Breast epithelium (tissue), 4 donors: ENCODE measurements at regions of chr1 and their contacts with region 1.

Region 1: GRCh38 chr1:44911026-44911425 is 68.0 kb upstream of the PTCH2 start:
- DNase-seq: no peak
- H3K4me3 ChIP-seq: no peak overlapping the region
- H3K27ac ChIP-seq: no peak overlapping the region
- H3K4me1 ChIP-seq: no peaks in the 10 kb centered on the region
- H3K27me3 ChIP-seq: no peaks in the 10 kb centered on the region
- CTCF ChIP-seq: no peak
- POLR2A ChIP-seq: no peak

Region 2: GRCh38 chr1:44924835-44925513 is 13.9 kb after region 1 on chr1:
- intact Hi-C with region 1: loop called (anchors 1 kb)
- DNase-seq: no peak
- H3K4me3 ChIP-seq: no peak overlapping the region
- H3K27ac ChIP-seq: no peak overlapping the region
- H3K4me1 ChIP-seq: no peaks in the 10 kb centered on the region
- H3K27me3 ChIP-seq: no peaks in the 10 kb centered on the region
- CTCF ChIP-seq: peak in 1 of 3 donors; percentile 21
- POLR2A ChIP-seq: no peak